CD4-positive, alpha-beta memory T cell (primary cell): ENCODE measurements at regions of chr6 and their contacts with region 1.

Region 1: DNA sequence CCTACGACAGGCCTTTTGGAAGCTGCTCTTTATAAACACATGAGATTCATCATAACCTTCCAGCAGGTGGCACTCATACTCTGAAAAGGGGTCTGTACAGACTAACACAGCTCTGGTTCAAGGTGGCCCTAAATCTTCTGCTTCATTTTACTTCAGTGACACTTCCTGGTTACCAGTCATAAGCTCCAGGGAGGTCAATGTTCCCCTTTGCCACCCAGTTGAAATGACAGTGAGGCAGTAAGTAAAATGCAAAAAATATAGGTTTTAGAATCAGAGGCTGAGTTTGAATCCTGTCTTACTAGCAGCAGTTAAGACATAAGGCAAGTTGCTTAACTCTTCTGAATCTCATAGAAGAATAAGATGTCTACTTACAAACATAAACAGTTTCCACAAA is 132.8 kb downstream of the CDK19 start:
- DNase-seq: peak; percentile 76 to 81 (median 78)
- H3K4me3 ChIP-seq: no peak overlapping the region
- H3K4me3 Mint-ChIP-seq: peak overlapping the region in 1 of 8 donors; percentile 0
- H3K27ac ChIP-seq: no peak overlapping the region
- H3K27ac Mint-ChIP-seq: peak overlapping the region in 4 of 7 donors; percentile 60 to 76 (median 69)
- H3K4me1 ChIP-seq: peaks cover 13% of the 10 kb centered on the region
- H3K4me1 Mint-ChIP-seq: peaks cover 11 to 24% (median 16%) of the 10 kb centered on the region in 4 donors
- H3K27me3 ChIP-seq: no peaks in the 10 kb centered on the region
- H3K27me3 Mint-ChIP-seq: no peaks in the 10 kb centered on the region

Region 2: DNA sequence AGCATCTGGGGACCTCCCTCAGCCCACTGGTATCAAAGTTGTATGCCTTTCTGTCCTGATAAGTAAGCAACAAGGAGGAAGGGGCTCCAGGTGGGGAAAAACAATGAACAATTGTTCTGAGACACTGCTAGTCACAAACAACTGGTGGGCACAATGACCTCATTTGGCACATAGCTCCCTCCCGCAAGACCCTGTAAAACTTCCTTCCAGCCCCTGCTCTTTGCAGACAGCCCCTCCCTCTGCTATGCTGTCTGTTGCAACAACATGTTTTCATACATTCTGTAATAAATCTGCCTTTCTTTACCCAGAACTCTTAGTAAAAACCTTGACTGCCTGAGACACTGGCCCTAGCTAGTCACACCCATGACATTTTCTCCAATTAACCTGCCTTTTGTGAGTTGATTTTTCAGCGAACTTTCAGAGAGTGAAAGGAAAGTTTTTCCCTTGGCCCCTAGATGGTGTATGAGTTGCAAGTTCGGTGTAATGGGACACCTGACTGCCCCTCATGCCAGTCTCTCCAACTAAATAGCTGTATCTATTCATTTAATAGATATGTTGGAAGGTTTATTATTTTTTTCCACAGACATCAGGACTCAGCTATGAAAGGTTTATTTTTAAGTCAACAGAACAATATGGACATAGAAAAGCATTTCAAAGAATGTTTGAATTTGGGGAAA is 63.7 kb before region 1 on chr6:
- CTCF ChIA-PET with region 1: no interaction called
- POLR2A ChIA-PET with region 1: no interaction called
- intact Hi-C with region 1: no loop called
- DNase-seq: no peak
- H3K4me3 ChIP-seq: no peak overlapping the region
- H3K4me3 Mint-ChIP-seq: no peak overlapping the region
- H3K27ac ChIP-seq: no peak overlapping the region
- H3K27ac Mint-ChIP-seq: peak overlapping the region in 5 of 7 donors; percentile 26 to 60 (median 29)
- H3K4me1 ChIP-seq: no peaks in the 10 kb centered on the region
- H3K4me1 Mint-ChIP-seq: peaks cover 0 to 5% (median 0%) of the 10 kb centered on the region in 4 donors
- H3K27me3 ChIP-seq: no peaks in the 10 kb centered on the region
- H3K27me3 Mint-ChIP-seq: no peaks in the 10 kb centered on the region

Region 3: DNA sequence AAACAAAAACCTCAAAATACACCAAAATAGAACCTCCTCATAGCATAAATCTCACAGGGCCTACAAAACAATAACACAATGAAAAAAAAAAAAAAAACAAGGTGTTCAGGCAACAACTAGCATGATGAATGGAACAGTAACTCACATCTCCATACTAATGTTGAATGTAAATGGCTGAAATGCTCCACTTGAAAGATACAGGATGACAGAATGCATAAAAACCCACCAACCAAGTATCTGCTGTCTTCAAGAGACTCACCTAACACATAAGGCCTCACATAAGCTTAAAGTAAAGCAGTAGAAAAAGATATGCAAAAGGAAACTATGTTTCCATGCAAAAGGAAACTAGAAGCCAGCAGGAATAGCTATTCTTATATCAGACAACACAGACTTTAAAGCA is 11.5 kb after region 1 on chr6:
- CTCF ChIA-PET with region 1: interaction called, 11 read pairs
- POLR2A ChIA-PET with region 1: no interaction called
- intact Hi-C with region 1: no loop called
- DNase-seq: no peak
- H3K4me3 ChIP-seq: no peak overlapping the region
- H3K4me3 Mint-ChIP-seq: no peak overlapping the region
- H3K27ac ChIP-seq: no peak overlapping the region
- H3K27ac Mint-ChIP-seq: no peak overlapping the region
- H3K4me1 ChIP-seq: peaks cover 8% of the 10 kb centered on the region
- H3K4me1 Mint-ChIP-seq: peaks cover 8 to 17% (median 15%) of the 10 kb centered on the region in 4 donors
- H3K27me3 ChIP-seq: no peaks in the 10 kb centered on the region
- H3K27me3 Mint-ChIP-seq: no peaks in the 10 kb centered on the region

Region 4: DNA sequence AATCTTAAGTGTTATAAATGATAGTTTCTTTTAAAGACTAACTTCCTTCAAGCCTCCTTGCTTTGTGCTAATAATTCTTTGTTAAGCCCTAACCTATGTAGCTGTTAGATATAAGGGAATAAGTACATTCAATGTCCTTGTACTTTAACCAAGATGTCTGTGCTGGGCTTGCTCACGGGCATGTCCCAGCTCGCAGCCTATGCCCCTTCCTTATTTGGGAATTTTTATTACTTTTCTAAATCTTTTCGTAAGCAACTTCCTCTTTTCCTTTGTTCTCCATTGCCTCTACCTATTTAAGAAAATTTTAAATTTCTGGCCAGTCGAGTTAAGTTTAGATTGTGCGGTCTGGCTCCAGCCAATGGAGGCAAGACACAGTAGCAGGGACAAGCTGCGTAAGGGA is 158.8 kb after region 1 on chr6:
- CTCF ChIA-PET with region 1: no interaction called
- POLR2A ChIA-PET with region 1: no interaction called
- intact Hi-C with region 1: no loop called
- DNase-seq: no peak
- H3K4me3 ChIP-seq: no peak overlapping the region
- H3K4me3 Mint-ChIP-seq: no peak overlapping the region
- H3K27ac ChIP-seq: no peak overlapping the region
- H3K27ac Mint-ChIP-seq: peak overlapping the region in 1 of 7 donors; percentile 48
- H3K4me1 ChIP-seq: no peaks in the 10 kb centered on the region
- H3K4me1 Mint-ChIP-seq: no peaks in the 10 kb centered on the region
- H3K27me3 ChIP-seq: no peaks in the 10 kb centered on the region
- H3K27me3 Mint-ChIP-seq: no peaks in the 10 kb centered on the region

Region 5: GRCh38 chr6:110890288-110890687 is 207.8 kb after region 1 on chr6:
- CTCF ChIA-PET with region 1: interaction called, 13 read pairs
- POLR2A ChIA-PET with region 1: no interaction called
- intact Hi-C with region 1: no loop called
- DNase-seq: no peak
- H3K4me3 ChIP-seq: no peak overlapping the region
- H3K4me3 Mint-ChIP-seq: no peak overlapping the region
- H3K27ac ChIP-seq: no peak overlapping the region
- H3K27ac Mint-ChIP-seq: no peak overlapping the region
- H3K4me1 ChIP-seq: peaks cover 30% of the 10 kb centered on the region
- H3K4me1 Mint-ChIP-seq: peaks cover 20 to 36% (median 28%) of the 10 kb centered on the region in 4 donors
- H3K27me3 ChIP-seq: no peaks in the 10 kb centered on the region
- H3K27me3 Mint-ChIP-seq: no peaks in the 10 kb centered on the region

Region 6: DNA sequence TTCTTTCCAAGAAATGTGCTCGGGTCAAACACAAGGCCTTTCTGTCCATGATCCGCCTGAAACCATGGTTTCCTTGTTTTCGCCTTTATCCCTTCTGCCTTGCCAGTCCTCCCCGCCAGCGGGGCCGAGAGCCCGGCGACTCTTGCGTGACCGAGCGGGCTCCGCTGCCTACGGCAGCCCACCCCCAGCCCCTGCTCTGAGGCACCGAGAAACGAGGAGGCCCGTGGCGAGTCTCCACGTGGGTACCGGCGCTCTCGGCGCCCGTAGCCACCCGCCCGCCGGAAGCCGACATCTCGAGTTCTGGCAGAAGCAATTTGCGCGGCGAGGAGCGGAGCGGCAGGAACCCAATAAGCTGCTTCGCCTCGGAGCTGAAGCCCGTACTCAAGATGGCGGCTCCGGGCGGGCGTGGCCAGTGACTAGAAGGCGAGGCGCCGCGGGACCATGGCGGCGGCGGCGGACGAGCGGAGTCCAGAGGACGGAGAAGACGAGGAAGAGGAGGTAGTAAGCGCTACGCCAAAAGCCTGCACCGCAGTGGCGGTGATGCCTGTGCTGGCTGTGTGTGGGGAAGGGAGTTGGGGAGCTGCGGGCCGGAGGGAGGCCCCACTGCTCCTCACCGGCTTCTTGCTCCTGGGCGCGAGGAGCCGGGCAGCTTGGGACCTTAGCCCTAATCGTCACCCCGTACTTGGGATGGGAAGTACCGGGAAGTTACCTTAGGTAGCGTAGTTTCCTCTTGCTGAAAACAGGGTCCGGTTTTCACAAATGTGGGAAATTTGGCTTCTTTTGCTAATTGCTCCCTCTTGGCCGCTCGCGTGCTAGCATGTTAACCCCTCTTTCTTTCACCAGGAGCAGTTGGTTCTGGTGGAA is 276.1 kb after region 1 on chr6 and contains the start of gene GTF3C6:
- CTCF ChIA-PET with region 1: interaction called, 192 read pairs
- POLR2A ChIA-PET with region 1: interaction called, 16 read pairs
- intact Hi-C with region 1: no loop called
- DNase-seq: peak; percentile 90 to 94 (median 92)
- H3K4me3 ChIP-seq: peak within 1 kb of the TSS; percentile 69 to 94
- H3K4me3 Mint-ChIP-seq: peak within 1 kb of the TSS; percentile 95 to 99 (median 98)
- H3K27ac ChIP-seq: peak within 1 kb of the TSS; percentile 82
- H3K27ac Mint-ChIP-seq: peak within 1 kb of the TSS; percentile 91 to 99 (median 98)
- H3K4me1 ChIP-seq: peaks cover 20% of the 10 kb centered on the region
- H3K4me1 Mint-ChIP-seq: peaks cover 11 to 26% (median 17%) of the 10 kb centered on the region in 4 donors
- H3K27me3 ChIP-seq: no peaks in the 10 kb centered on the region
- H3K27me3 Mint-ChIP-seq: no peaks in the 10 kb centered on the region
- total RNA-seq, gene GTF3C6: 28.9 to 35.7 TPM

Region 7: DNA sequence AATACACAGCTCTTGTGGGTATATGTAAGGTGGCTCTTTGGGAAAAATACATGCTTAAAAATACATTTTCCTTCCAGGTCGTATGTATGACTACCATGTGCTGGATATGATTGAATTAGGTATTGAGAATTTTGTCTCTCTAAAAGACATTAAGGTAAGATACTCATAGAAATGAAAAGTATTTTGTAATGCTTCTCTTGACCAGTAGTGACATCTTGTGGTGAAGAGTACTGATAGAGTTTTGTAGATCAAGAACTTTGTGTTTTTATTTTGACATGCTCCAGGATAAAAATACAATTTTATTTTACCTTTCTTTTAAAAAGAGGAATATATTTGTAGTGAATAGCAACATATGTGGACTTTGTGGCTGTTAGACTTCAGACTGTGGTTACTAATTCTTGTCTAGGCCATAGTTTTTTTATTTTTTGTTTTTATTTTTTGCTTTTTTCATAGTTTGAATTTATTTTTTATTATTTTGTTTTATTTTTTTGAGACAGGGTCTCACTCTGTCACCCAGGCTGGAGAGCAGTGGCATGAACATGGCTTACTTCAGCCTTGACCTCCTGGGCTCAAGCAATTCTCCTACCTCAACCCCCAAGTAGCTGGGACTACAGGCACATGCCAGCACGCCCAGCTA is 317.3 kb after region 1 on chr6:
- CTCF ChIA-PET with region 1: interaction called, 21 read pairs
- POLR2A ChIA-PET with region 1: no interaction called
- intact Hi-C with region 1: loop called (anchors 1 kb)
- DNase-seq: peak in 4 of 5 donors; percentile 21 to 35 (median 25)
- H3K4me3 ChIP-seq: no peak overlapping the region
- H3K4me3 Mint-ChIP-seq: no peak overlapping the region
- H3K27ac ChIP-seq: no peak overlapping the region
- H3K27ac Mint-ChIP-seq: peak overlapping the region in 2 of 7 donors; percentile 27 to 51
- H3K4me1 ChIP-seq: no peaks in the 10 kb centered on the region
- H3K4me1 Mint-ChIP-seq: peaks cover 0 to 4% (median 1%) of the 10 kb centered on the region in 4 donors
- H3K27me3 ChIP-seq: no peaks in the 10 kb centered on the region
- H3K27me3 Mint-ChIP-seq: no peaks in the 10 kb centered on the region